ENCODE measurements at regions of chr19 and their contacts with region 1.

Region 1: GRCh38 chr19:2977001-2977685 is at the start of gene TLE6:
- DNase-seq: peak; percentile 81 to 95
- H3K4me3 ChIP-seq: peak within 1 kb of the TSS; percentile 57 to 67
- H3K27ac ChIP-seq: peak within 1 kb of the TSS; percentile 44 to 50
- H3K4me1 ChIP-seq: peaks cover 15 to 24% of the 10 kb centered on the region in 2 donors
- H3K27me3 ChIP-seq: no peaks in the 10 kb centered on the region
- CTCF ChIP-seq: no peak
- total RNA-seq, gene TLE6: not detected

Region 2: DNA sequence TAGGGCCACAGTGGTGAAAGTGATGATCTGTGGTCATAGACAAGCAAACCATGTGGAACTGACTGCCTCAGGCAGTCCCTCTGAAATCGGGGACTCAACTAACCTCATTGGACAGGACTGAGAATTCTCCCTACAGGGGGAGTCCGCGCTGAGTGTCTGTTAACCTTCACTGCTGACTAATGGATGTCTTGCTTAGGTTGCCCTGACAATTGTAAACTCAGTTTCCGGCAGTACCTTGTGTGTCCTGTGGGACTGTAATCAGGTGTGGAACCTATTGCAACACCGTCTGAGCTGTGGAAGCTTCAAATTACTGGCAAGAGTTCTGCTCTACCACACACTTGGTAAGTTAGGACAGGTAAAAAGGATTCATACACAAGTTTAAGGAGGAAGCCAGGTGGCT is 54.2 kb before region 1 on chr19:
- intact Hi-C with region 1: no loop called
- DNase-seq: peak in 1 of 2 donors; percentile 40
- H3K4me3 ChIP-seq: no peak overlapping the region
- H3K27ac ChIP-seq: no peak overlapping the region
- H3K4me1 ChIP-seq: no peaks in the 10 kb centered on the region
- H3K27me3 ChIP-seq: no peaks in the 10 kb centered on the region
- CTCF ChIP-seq: no peak

Region 3: DNA sequence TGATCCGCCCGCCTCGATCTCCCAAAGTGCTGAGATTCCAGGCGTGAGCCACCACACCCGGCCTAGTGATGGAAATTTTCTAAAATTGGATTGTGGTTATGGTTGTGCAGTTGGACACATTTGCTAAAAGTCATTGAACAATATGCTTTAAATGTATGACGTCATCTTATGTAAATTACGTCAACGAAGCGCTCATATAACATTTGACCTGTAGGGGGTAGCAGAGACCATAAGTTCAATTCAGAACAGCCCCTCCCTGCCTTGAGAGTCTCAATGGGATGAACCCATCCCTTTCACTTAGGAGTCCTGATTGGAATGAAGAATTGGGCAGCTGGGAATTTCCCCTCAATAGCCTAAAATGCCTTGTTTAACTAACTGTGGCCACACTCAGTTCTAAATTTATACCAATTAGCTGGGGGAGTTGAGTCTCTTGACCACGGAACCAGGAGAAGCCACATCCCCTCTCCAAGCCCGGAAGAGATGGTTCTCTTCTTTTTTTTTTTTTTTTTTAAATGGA is 15.0 kb before region 1 on chr19:
- intact Hi-C with region 1: loop called (anchors 2 kb)
- DNase-seq: peak in 1 of 2 donors; percentile 75
- H3K4me3 ChIP-seq: no peak overlapping the region
- H3K27ac ChIP-seq: no peak overlapping the region
- H3K4me1 ChIP-seq: no peaks in the 10 kb centered on the region
- H3K27me3 ChIP-seq: no peaks in the 10 kb centered on the region
- CTCF ChIP-seq: peak; percentile 72 to 93 (median 78)

Region 4: DNA sequence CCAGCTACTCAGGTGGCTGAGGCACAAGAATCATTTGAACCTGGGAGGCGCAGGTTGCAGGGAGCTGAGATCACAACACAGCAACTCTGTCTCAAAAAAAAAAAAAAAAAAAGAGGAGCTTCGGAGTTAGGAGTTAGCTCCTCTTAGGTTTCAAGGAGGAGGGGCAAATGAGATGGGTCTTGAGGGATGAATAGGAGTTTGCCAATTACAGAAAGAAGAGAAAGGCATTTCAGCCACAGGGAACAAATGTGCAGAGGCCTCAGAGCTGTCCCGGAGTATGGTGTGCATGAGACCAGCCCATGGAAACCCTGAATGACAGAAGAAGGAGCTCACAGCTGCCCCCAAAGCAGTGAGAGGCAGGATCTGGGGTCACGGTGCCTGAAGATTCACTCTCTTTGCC is 27.4 kb after region 1 on chr19:
- intact Hi-C with region 1: loop called (anchors 1 kb)
- DNase-seq: no peak
- H3K4me3 ChIP-seq: no peak overlapping the region
- H3K27ac ChIP-seq: no peak overlapping the region
- H3K4me1 ChIP-seq: no peaks in the 10 kb centered on the region
- H3K27me3 ChIP-seq: no peaks in the 10 kb centered on the region
- CTCF ChIP-seq: no peak

Region 5: DNA sequence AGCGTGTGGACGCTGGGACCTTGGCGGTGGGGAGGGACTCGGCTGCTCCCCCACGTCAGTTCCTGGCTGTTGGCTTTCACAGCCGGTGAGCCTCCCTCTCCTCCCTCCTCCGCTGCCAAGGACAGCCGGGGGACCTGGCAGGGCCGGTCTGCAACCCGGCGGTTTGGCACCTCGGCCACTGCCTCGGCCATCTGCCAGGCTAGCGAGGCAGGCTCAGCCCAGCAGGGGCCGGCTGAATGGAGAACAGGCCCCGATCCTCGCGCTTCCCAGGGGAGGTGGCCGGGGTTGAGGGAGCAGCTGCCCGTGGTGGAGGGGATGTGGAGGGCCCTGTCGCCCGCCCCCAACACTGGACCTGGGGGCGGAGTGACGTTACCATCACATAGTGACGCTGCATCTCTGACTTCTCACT is 80.2 kb after region 1 on chr19:
- intact Hi-C with region 1: loop called (anchors 2 kb)
- DNase-seq: peak; percentile 21 to 92
- H3K4me3 ChIP-seq: peak overlapping the region; percentile 25 to 28
- H3K27ac ChIP-seq: peak overlapping the region; percentile 70 to 75
- H3K4me1 ChIP-seq: peaks cover 9 to 14% of the 10 kb centered on the region in 2 donors
- H3K27me3 ChIP-seq: no peaks in the 10 kb centered on the region
- CTCF ChIP-seq: peak in 1 of 3 experiments; percentile 6

Region 6: DNA sequence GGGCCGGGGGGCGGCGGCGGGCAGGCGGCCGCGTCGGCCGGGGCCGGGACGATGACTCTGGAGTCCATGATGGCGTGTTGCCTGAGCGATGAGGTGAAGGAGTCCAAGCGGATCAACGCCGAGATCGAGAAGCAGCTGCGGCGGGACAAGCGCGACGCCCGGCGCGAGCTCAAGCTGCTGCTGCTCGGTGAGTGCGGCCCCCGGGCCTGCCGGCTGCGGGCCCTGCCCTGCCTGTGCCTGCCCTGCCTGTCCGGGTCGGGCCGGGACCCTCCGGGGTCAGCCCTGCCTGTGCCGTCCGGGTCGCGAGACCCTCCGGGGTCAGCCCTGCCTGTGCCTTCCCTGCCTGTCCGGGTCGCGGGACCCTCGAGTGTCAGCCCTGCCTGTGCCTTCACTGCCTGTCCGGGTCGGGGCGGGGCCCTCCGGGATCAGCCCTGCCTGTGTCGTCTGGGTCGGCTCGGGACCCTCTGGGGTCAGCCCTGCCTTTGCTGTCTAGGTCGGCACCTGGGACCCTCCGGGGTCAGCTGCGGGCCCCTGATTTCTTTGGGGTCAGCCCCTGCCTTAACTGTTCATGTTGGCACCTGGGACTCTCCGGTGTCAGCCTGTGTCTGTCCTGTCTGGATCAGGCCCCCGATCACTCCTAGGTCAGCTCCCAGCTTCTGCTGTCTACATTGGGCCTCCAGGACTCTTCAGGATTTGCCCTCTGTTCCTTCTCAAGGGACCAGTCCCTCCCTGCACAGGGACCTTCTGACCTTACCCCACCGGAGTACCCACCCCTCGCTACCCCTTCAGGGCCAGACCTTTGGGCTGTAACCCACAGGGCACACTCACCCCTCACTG is 117.7 kb after region 1 on chr19:
- intact Hi-C with region 1: no loop called
- DNase-seq: no peak
- H3K4me3 ChIP-seq: peak overlapping the region; percentile 86 to 98
- H3K27ac ChIP-seq: peak overlapping the region; percentile 66 to 90
- H3K4me1 ChIP-seq: peaks cover 34 to 44% of the 10 kb centered on the region in 2 donors
- H3K27me3 ChIP-seq: no peaks in the 10 kb centered on the region
- CTCF ChIP-seq: no peak

Measured in ascending aorta (tissue), 2 donors.